ENCODE measurements at regions of chr4 and their contacts with region 1.

Region 1: GRCh38 chr4:18138076-18138665 is 116.6 kb upstream of the LCORL start:
- DNase-seq: no peak
- ATAC-seq: no peak
- H3K4me3 Mint-ChIP-seq: no peak overlapping the region
- H3K27ac Mint-ChIP-seq: no peak overlapping the region
- H3K4me1 Mint-ChIP-seq: no peaks in the 10 kb centered on the region
- H3K27me3 Mint-ChIP-seq: peaks cover 5% of the 10 kb centered on the region
- CTCF ChIP-seq: no peak

Region 2: GRCh38 chr4:17124767-17125166 is 1013.4 kb before region 1 on chr4:
- CTCF ChIA-PET with region 1: no interaction called
- POLR2A ChIA-PET with region 1: no interaction called
- intact Hi-C with region 1: loop called (anchors 5 kb)
- DNase-seq: no peak
- ATAC-seq: no peak
- H3K4me3 Mint-ChIP-seq: no peak overlapping the region
- H3K27ac Mint-ChIP-seq: no peak overlapping the region
- H3K4me1 Mint-ChIP-seq: no peaks in the 10 kb centered on the region
- H3K27me3 Mint-ChIP-seq: no peaks in the 10 kb centered on the region
- CTCF ChIP-seq: no peak

Measured in activated B cell treated with CpG ODN at 0.5 μM for 24 hours (primary cell).